ENCODE measurements at regions of chr7 and their contacts with region 1.

Region 1: GRCh38 chr7:141014524-141015395 is at the start of gene MRPS33:
- DNase-seq: peak; percentile 93
- H3K4me3 ChIP-seq: peak within 1 kb of the TSS; percentile 75
- H3K27ac ChIP-seq: peak within 1 kb of the TSS; percentile 95
- H3K4me1 ChIP-seq: peaks cover 22% of the 10 kb centered on the region
- H3K27me3 ChIP-seq: peaks cover 6% of the 10 kb centered on the region
- CTCF ChIP-seq: no peak
- total RNA-seq, gene MRPS33: 123 TPM

Region 2: DNA sequence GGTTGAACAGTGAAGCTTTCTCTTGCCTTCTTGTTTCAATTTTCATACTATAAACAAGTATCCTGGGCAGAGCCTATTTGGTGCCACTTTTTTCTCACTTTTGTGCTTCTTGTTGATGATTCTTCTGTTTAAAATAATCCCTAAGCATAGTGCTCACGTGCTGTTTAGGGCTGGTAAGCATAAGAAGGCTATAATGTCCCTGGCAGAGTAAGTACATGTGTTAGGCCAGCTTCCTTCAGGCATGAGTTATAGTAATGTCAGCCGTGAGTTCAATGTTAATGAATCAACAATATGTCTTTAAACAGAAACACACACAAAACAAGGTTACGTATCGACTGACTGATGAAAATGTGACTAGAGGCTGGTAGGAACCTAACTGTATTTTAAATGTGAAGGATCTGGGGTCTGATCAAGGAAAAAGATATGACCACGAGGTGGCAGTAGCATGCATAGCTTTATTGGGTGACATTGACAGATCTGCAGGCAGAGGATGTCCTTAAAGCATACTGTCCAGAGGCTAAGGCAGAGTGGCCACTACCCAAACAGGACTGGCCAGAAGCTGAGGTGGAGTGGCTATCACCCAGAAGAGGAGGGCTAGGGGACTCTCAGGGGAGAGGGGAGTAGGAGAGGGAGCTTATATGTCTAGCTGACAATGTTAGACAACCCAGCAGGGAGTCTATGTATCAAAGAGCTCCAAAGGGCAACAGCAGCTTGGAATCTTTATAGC is 203.8 kb before region 1 on chr7:
- intact Hi-C with region 1: loop called (anchors 5 kb)
- DNase-seq: no peak
- H3K4me3 ChIP-seq: no peak overlapping the region
- H3K27ac ChIP-seq: no peak overlapping the region
- H3K4me1 ChIP-seq: peaks cover 18% of the 10 kb centered on the region
- H3K27me3 ChIP-seq: no peaks in the 10 kb centered on the region
- CTCF ChIP-seq: peak; percentile 84